ENCODE measurements at regions of chr4 and their contacts with region 1.

Region 1: DNA sequence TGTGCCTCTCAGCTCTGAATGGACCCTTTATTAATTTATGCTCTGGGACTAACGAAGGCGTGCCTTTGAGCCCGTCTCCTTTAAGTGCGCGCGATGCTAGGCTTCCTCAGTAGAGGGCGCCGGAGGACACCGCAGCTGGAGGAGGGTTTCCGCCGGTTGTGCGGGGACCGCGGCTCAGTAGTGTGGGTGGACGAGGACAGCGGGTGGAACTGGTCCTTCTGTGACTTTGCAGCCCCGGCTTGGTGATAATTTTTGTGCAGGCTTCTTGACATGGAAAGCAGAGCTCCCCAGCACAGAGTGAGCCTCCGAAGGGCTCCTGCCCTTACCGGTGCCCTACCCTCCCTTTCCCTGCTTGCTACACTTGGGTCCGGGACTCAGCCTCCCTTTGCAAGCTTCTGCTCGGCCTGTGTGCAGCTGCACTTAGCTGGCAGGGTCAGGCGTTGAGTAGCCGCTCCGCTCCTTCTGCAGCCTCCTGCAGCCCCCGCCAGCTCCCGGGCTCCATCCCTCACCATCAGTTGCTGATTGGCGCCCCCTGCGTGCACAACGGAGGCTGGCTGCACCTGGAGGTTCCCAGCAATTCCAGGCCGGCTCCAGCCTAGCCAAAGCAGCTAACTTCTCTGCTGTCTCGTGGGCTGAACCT is 26.8 kb upstream of the BOD1L1 start:
- DNase-seq: peak; percentile 62
- H3K4me3 ChIP-seq: peak overlapping the region; percentile 54 to 61 (median 54)
- H3K27ac ChIP-seq: no peak overlapping the region
- H3K4me1 ChIP-seq: peaks cover 18% of the 10 kb centered on the region
- H3K27me3 ChIP-seq: no peaks in the 10 kb centered on the region
- CTCF ChIP-seq: peak; percentile 90 to 96

Region 2: GRCh38 chr4:13705521-13706041 is 51.3 kb after region 1 on chr4:
- CTCF ChIA-PET with region 1: interaction called, 3 read pairs
- dilution Hi-C with region 1: no loop called
- in situ Hi-C with region 1: no loop called
- intact Hi-C with region 1: loop called (anchors 2 kb)
- DNase-seq: peak; percentile 81
- H3K4me3 ChIP-seq: peak overlapping the region in 1 of 3 experiments; percentile 28
- H3K27ac ChIP-seq: peak overlapping the region; percentile 91
- H3K4me1 ChIP-seq: peaks cover 51% of the 10 kb centered on the region
- H3K27me3 ChIP-seq: no peaks in the 10 kb centered on the region
- CTCF ChIP-seq: no peak

Region 3: GRCh38 chr4:13907255-13907751 is 253.0 kb after region 1 on chr4:
- CTCF ChIA-PET with region 1: no interaction called
- dilution Hi-C with region 1: no loop called
- in situ Hi-C with region 1: no loop called
- intact Hi-C with region 1: loop called (anchors 1 kb)
- DNase-seq: peak; percentile 97
- H3K4me3 ChIP-seq: no peak overlapping the region
- H3K27ac ChIP-seq: peak overlapping the region; percentile 86
- H3K4me1 ChIP-seq: peaks cover 30% of the 10 kb centered on the region
- H3K27me3 ChIP-seq: no peaks in the 10 kb centered on the region
- CTCF ChIP-seq: peak; percentile 18 to 38

Region 4: DNA sequence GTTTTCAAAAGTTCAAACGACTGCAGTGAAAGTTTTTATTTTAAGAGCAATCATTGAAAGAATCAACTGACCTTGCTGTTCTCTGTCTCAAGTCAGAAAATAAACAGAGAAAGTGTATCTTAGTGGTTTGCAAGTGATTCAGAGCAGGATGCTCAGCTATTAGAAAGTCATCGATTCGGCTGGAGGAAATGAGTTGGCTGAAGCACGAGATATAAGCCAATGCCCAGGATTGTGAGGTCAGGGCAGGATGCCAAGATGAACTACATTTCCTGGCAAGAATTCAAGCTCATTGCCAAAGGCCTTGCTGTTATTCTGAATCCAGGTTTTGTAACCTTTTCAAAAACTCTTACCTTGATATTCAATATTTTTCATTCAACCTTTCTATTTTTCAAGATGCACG is 514.6 kb after region 1 on chr4:
- CTCF ChIA-PET with region 1: no interaction called
- dilution Hi-C with region 1: no loop called
- in situ Hi-C with region 1: no loop called
- intact Hi-C with region 1: loop called (anchors 2 kb)
- DNase-seq: peak; percentile 96
- H3K4me3 ChIP-seq: no peak overlapping the region
- H3K27ac ChIP-seq: peak overlapping the region; percentile 83
- H3K4me1 ChIP-seq: peaks cover 25% of the 10 kb centered on the region
- H3K27me3 ChIP-seq: no peaks in the 10 kb centered on the region
- CTCF ChIP-seq: no peak

Region 5: GRCh38 chr4:14446311-14446710 is 792.0 kb after region 1 on chr4:
- CTCF ChIA-PET with region 1: no interaction called
- dilution Hi-C with region 1: no loop called
- in situ Hi-C with region 1: no loop called
- intact Hi-C with region 1: loop called (anchors 5 kb)
- DNase-seq: peak; percentile 91
- H3K4me3 ChIP-seq: peak overlapping the region in 1 of 3 experiments; percentile 14
- H3K27ac ChIP-seq: peak overlapping the region; percentile 86
- H3K4me1 ChIP-seq: peaks cover 20% of the 10 kb centered on the region
- H3K27me3 ChIP-seq: no peaks in the 10 kb centered on the region
- CTCF ChIP-seq: no peak

Region 6: GRCh38 chr4:14871676-14872430 is 1217.6 kb after region 1 on chr4:
- CTCF ChIA-PET with region 1: no interaction called
- dilution Hi-C with region 1: no loop called
- in situ Hi-C with region 1: no loop called
- intact Hi-C with region 1: loop called (anchors 10 kb)
- DNase-seq: peak; percentile 92
- H3K4me3 ChIP-seq: no peak overlapping the region
- H3K27ac ChIP-seq: no peak overlapping the region
- H3K4me1 ChIP-seq: peaks cover 13% of the 10 kb centered on the region
- H3K27me3 ChIP-seq: no peaks in the 10 kb centered on the region
- CTCF ChIP-seq: peak; percentile 48 to 59

Measured in mammary epithelial cell (primary cell).